Panc1 (cell line): ENCODE measurements at regions of chr2 and their contacts with region 1.

Region 1: DNA sequence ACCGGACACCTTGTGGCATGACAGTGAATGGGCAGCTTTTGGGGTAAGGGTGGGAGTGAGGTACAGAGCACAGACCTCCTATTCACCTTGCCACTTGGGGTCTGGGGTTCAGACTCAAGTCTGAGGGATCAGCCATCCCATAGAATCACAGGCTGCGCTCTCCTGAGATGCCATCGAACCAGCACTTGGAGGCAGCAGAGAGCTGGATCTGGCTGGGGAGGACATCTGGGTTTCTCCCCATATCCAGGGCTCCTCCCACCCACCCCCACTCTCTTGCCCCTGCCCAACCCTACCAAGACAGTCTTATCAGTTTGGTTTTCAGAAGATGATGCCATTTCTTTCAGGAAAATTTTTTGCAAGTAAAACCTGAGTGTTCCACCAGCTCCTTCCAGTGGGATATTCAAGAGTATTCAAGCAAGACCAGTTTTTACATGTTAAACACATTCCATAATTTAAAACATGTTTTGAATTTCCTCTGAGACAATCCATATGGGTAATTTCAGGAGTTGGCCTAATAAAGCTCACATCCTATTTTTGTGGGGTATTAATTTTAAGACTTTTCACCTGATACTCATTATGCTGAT is 29.2 kb upstream of the TEX44 start:
- DNase-seq: peak; percentile 53
- ATAC-seq: peak; percentile 94
- H3K4me3 ChIP-seq: no peak overlapping the region
- H3K27ac ChIP-seq: no peak overlapping the region
- H3K4me1 ChIP-seq: no peaks in the 10 kb centered on the region
- H3K27me3 ChIP-seq: no peaks in the 10 kb centered on the region
- CTCF ChIP-seq: peak; percentile 88

Region 2: GRCh38 chr2:231604685-231605606 is 41.5 kb after region 1 on chr2:
- CTCF ChIA-PET with region 1: interaction called, 15 read pairs
- POLR2A ChIA-PET with region 1: interaction called, 4 read pairs
- in situ Hi-C with region 1: no loop called
- intact Hi-C with region 1: loop called (anchors 1 kb)
- DNase-seq: peak; percentile 53
- ATAC-seq: peak; percentile 93
- H3K4me3 ChIP-seq: peak overlapping the region; percentile 52 to 55
- H3K27ac ChIP-seq: peak overlapping the region; percentile 65
- H3K4me1 ChIP-seq: peaks cover 13% of the 10 kb centered on the region
- H3K27me3 ChIP-seq: no peaks in the 10 kb centered on the region
- CTCF ChIP-seq: no peak